A673 (cell line): ENCODE measurements at regions of chr6 and their contacts with region 1.

Region 1: DNA sequence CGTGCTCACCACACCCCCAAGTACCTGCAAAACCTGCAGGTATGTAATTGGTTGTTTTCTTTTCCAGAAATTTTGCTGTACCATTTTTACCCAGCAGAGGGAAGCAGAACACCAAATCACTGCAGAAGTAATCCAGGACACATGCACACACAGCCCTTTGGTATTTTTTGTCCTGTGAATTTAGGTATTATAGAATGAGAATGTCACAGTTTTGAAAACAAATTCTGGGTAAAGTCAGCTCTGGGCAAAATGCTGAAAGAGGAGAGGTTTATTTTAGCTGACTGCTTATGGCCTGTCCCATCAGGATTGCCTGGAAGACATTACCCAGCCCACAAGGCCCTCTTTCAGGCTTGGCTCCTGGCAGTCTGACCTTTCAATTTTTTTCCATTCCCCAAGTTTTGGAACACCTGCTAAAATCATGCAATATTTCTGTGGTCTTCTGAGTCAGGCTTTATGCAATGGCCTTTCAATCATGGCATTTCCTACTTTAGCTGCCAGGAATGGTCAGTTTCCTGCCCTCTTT is 3.5 kb upstream of the EFHC1 start:
- DNase-seq: peak; percentile 80
- H3K4me3 ChIP-seq: no peak overlapping the region
- H3K27ac ChIP-seq: peak overlapping the region; percentile 18
- H3K4me1 ChIP-seq: peaks cover 28% of the 10 kb centered on the region
- H3K27me3 ChIP-seq: no peaks in the 10 kb centered on the region
- CTCF ChIP-seq: peak; percentile 84

Region 2: DNA sequence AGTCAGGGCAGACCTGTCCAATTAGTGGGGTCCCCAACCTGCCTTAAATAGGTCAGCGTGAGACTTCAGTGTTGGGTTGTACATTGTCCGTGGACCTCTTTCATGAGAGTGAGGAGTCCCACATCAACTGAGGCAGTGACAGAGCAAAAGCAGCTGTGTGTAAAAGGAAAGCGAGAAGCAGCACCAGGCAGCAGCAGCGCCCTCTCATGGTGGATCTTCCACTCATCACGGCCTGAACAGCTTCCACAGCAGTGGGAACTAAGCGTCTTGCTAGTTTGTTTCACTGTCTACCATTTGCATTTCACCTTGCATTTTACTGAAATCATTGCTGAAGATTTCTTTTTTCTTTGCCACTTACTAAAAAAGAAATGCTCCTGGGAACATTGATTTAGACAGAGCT is 663.1 kb before region 1 on chr6:
- CTCF ChIA-PET with region 1: no interaction called
- POLR2A ChIA-PET with region 1: no interaction called
- intact Hi-C with region 1: no loop called
- DNase-seq: peak; percentile 55
- H3K4me3 ChIP-seq: no peak overlapping the region
- H3K27ac ChIP-seq: no peak overlapping the region
- H3K4me1 ChIP-seq: no peaks in the 10 kb centered on the region
- H3K27me3 ChIP-seq: no peaks in the 10 kb centered on the region
- CTCF ChIP-seq: peak; percentile 81

Region 3: GRCh38 chr6:52664186-52664990 is 247.7 kb after region 1 on chr6:
- CTCF ChIA-PET with region 1: interaction called, 3 read pairs
- POLR2A ChIA-PET with region 1: no interaction called
- intact Hi-C with region 1: loop called (anchors 1 kb)
- DNase-seq: peak; percentile 97
- H3K4me3 ChIP-seq: peak overlapping the region; percentile 64
- H3K27ac ChIP-seq: peak overlapping the region; percentile 54
- H3K4me1 ChIP-seq: peaks cover 26% of the 10 kb centered on the region
- H3K27me3 ChIP-seq: no peaks in the 10 kb centered on the region
- CTCF ChIP-seq: no peak

Region 4: DNA sequence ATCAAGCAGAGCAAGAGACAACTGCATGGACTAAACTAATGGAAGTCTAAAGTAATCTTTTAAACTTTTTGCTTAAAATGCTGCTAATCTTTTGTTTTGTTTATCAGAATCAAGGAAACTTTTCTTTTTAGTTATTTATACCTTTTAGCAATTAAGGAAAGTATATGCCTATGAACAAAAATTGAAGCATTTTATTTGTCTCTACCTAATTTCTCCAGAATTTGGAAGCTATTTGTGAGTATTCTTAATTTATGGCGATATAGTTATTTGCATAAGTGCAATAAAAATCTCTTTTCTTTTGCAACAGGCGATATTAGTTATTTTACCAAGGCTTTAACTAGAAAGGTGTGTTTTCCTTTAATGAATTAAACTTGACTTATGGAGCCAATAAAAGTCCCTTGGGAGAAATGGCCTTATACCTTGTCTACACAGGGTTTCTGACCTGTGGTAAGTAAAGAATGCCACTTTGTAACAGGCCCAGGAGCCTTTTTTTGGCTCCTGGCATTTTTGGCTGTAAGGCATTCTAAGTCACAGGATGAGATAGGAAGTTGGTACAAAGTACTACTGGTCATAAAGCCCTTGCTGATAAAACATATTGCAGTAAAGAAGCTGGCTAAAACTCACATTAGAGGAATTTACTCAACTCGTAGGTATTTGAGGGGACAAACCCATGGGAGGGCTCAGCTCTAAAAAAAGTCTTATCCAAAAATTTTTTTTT is 291.4 kb after region 1 on chr6:
- CTCF ChIA-PET with region 1: no interaction called
- POLR2A ChIA-PET with region 1: no interaction called
- intact Hi-C with region 1: no loop called
- DNase-seq: no peak
- H3K4me3 ChIP-seq: no peak overlapping the region
- H3K27ac ChIP-seq: no peak overlapping the region
- H3K4me1 ChIP-seq: no peaks in the 10 kb centered on the region
- H3K27me3 ChIP-seq: no peaks in the 10 kb centered on the region
- CTCF ChIP-seq: no peak